ENCODE measurements at regions of chrX and their contacts with region 1.

Region 1: GRCh38 chrX:76172325-76172893 is 453 bp upstream of the PBDC1 start:
- DNase-seq: no peak
- ATAC-seq: peak; percentile 51
- H3K4me3 ChIP-seq: peak overlapping the region; percentile 50; the same call in 1 of the 2 replicates
- H3K27ac ChIP-seq: peak overlapping the region; percentile 78
- H3K4me1 ChIP-seq: no peaks in the 10 kb centered on the region; a peak in 1 of 5 replicates
- H3K27me3 ChIP-seq: no peaks in the 10 kb centered on the region
- CTCF ChIP-seq: no peak
- EP300 ChIP-seq: no peak
- POLR2A ChIP-seq: no peak
- RAD21 ChIP-seq: no peak

Region 2: GRCh38 chrX:76253432-76253831 is 81.0 kb after region 1 on chrX:
- CTCF ChIA-PET with region 1: no interaction called
- POLR2A ChIA-PET with region 1: no interaction called
- in situ Hi-C with region 1: no loop called
- intact Hi-C with region 1: loop called (anchors 10 kb)
- DNase-seq: peak; percentile 6 to 21 (median 10)
- ATAC-seq: peak; percentile 71; the same call in 2 of the 3 replicates
- H3K4me3 ChIP-seq: no peak overlapping the region
- H3K27ac ChIP-seq: no peak overlapping the region
- H3K4me1 ChIP-seq: no peaks in the 10 kb centered on the region
- H3K27me3 ChIP-seq: no peaks in the 10 kb centered on the region
- CTCF ChIP-seq: peak in 2 of 3 experiments; percentile 30 to 36; a peak in 2 of 6 replicates
- EP300 ChIP-seq: no peak
- POLR2A ChIP-seq: no peak
- RAD21 ChIP-seq: peak; percentile 39 to 51; a peak in 3 of 4 replicates

Measured in K562 (cell line).